ENCODE measurements at regions of chr3 and their contacts with region 1.

Region 1: DNA sequence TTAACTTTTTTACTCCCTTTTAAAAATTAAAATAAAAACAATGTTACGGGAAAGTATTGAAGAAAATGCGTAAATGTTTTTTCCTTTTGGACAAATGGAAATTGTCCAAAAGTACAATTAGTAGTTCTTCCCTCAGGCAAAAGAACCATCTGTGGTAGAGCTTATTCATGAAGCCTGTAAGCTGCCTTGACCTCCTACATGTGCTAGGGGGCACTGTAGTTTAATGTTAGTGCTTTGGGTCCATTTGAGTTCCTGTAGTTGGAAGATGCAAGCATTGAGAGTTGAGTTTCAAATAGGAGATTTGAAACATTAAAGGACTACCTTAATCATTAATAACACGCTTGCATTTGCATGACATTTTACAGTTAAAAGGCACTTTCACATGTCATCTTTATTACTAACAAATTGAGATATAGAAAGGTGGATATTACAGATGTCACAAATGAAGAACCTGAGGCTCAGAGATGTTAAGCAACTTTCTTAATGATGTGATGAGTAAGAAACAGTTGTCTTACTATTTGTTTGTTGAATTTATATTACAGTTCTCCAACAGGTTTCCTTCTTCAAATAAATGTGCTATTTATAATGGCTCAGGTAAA is 1.8 kb upstream of the ZNF385D start:
- DNase-seq: peak; percentile 9
- H3K4me3 ChIP-seq: no peak overlapping the region
- H3K27ac ChIP-seq: no peak overlapping the region
- H3K4me1 ChIP-seq: no peaks in the 10 kb centered on the region
- H3K27me3 ChIP-seq: peaks cover 0 to 17% of the 10 kb centered on the region in 2 experiments
- CTCF ChIP-seq: peak in 1 of 2 donors; percentile 25
- POLR2A ChIP-seq: no peak

Region 2: DNA sequence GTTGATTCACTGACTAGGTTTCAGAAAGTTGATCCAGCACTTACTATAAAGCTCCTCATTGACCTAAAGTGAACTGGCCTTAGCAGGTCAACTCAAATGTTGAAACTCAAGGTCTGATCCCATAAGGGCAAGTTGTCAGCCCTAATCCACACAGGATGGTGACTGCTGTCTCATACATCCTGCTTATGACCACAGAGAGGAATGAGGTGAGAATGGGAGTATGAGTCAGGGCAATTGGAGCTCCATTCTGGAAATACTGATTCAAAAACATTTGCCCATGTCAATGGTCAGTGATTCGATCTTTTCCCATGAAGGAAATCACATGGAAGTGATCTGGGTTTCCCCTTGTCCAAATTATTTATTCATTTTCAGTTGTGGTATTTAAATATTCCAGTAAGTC is 80.5 kb before region 1 on chr3:
- CTCF ChIA-PET with region 1: no interaction called
- POLR2A ChIA-PET with region 1: no interaction called
- dilution Hi-C with region 1: no loop called
- intact Hi-C with region 1: loop called (anchors 5 kb)
- DNase-seq: peak; percentile 83
- H3K4me3 ChIP-seq: no peak overlapping the region
- H3K27ac ChIP-seq: peak overlapping the region; percentile 56
- H3K4me1 ChIP-seq: peaks cover 22% of the 10 kb centered on the region
- H3K27me3 ChIP-seq: no peaks in the 10 kb centered on the region
- CTCF ChIP-seq: no peak
- POLR2A ChIP-seq: no peak

Measured in endothelial cell of umbilical vein (primary cell).